Activated CD4-positive, alpha-beta memory T cell treated with anti-CD3 and anti-CD28 coated beads, Interleukin-2, amount 10 ng/mL, durations not matched to agents 7 days and 5 days (primary cell): ENCODE measurements at regions of chr2 and their contacts with region 1.

Region 1: DNA sequence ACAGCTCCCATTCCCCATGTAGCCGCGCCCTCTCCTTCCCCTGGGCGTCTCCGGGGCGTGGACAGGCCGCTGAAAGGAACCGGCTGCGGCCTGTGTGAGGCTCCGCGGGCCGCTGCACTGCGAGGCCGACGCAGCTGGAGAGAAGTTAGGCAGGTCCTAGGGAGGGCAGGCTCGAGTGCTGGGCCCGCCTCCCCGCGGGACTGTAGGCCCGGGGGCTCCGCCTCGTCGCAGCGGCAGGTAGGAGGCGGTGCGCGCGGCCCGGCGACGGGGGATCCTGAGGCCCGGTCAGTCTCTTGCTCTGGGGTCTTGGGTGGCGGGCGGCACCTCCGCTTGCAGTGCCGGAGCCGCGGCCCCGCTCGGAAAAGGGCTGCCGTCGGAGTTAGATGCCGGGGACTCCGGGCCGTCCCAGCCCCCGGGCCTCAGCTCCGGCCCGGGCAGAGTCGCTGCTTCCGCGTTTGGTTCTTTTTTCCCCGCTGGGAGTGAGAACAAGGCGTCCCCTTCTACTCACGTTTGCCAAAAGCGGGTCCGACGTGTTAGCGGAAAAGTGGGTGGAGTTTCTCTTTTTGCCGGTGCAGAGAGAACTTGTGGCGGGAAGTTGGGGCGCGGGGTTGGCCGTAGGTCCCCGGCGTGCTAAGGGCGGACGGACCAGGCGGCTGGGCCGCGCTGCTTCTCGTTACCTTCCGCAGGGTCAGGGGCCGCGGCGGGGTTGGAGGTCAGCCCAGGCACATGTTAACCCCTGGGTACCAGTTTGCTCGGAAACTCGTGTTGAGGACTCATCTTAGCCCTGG is at the start of gene VRK2:
- DNase-seq: peak; percentile 89
- H3K4me3 Mint-ChIP-seq: peak within 1 kb of the TSS; percentile 89
- H3K27ac Mint-ChIP-seq: peak within 1 kb of the TSS; percentile 97
- H3K4me1 Mint-ChIP-seq: peaks cover 40% of the 10 kb centered on the region
- H3K27me3 Mint-ChIP-seq: no peaks in the 10 kb centered on the region
- total RNA-seq, gene VRK2: 24.5 to 26.6 TPM

Region 2: DNA sequence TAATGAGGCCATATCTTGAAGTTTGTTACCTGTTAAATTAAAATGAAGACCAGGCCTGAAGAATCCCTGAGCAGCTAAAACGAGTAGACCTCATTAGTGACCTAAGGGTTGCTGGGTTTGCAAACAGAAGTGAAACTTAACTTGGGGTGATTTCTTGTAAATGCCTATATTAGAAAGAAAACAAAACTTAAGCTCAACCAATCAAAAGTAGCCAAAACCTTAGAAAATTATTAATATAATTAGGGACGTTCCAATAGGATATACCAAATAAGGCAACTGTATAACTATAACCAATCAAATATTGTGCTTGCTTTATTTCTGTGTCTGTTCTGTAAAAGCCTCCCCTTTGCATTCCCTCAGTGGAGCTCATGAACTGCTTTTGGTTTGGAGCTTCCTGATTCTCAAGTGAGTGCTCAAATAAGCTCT is 138.0 kb before region 1 on chr2:
- CTCF ChIA-PET with region 1: interaction called, 3 read pairs
- POLR2A ChIA-PET with region 1: interaction called, 13 read pairs
- DNase-seq: no peak
- H3K4me3 Mint-ChIP-seq: no peak overlapping the region
- H3K27ac Mint-ChIP-seq: peak overlapping the region; percentile 70
- H3K4me1 Mint-ChIP-seq: peaks cover 21% of the 10 kb centered on the region
- H3K27me3 Mint-ChIP-seq: no peaks in the 10 kb centered on the region

Region 3: DNA sequence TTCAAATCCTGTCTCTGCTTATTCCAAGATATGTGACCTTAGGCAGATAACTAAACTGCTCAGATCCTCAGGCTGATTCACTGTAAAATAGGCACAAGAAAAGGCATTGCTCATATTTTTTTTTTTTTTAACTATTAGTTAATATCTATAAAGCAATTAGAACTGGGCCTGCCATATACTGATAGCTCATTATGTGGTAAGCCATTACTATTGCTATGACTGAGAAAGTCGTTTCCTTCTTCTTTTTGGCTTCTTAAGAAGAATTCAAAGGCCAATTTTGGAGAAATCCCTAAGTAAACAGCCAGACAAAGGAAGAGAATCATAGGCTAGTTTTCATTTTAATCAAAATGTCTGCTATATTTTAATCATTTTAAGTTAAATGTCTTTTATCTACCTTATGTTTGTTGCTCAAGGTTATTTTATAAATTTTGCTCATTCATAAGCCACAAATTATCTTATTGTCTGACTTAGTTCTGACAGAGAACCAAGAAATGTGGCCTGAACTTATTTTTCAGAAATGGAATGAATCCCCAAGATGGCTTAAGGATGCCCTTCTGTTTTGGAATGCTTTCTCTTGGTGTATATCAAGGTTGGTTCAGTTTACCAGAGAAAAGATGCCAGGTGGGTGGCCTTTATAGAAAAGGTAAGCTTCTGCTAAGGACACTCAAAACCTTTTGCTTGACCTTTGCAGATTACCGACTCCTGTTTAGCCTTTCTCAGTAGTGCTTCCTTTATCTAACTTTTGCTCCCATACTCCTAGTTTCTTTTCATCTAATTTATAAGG is 21.4 kb before region 1 on chr2:
- CTCF ChIA-PET with region 1: interaction called, 4 read pairs
- POLR2A ChIA-PET with region 1: interaction called, 12 read pairs
- DNase-seq: no peak
- H3K4me3 Mint-ChIP-seq: no peak overlapping the region
- H3K27ac Mint-ChIP-seq: no peak overlapping the region
- H3K4me1 Mint-ChIP-seq: peaks cover 9% of the 10 kb centered on the region
- H3K27me3 Mint-ChIP-seq: no peaks in the 10 kb centered on the region